ENCODE measurements at regions of chr7 and their contacts with region 1.

Region 1: DNA sequence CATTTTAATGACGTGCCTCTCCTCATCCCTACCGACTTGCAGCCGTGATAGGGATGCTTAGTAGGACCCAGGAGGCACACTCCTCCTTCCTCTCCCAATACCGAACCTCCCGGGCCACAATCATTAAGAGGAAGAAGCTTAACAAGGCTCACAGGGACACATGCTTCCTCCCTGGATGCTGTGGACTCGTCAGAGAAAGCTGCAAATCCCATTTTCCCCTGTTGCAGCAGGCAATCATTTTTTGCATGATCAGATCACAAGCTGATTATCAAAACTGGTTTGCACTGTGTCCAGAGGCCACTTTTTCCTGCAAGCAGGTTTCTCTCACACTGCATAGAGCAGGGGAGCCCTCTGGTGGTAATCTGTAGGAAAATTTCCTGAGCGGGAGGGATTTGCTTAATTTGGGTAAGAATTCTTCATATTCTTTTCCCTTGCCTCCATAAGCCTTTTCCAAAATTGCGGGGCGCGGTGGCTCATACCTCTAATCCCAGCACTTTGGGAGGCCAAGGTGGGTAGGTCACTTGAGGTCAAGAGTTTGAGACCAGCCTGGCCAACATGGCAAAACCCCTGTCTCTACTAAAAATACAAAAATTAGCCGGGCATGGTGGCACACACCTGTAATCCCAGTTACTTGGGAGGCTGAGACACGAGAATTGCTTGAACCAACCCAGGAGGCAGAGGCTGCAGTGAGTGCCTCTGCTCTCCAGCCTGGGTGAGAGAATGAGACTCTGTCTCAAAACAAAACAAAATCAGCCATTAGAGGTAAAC is 16.1 kb upstream of the LAMB4 start:
- DNase-seq: peak in 1 of 2 donors; percentile 75
- ATAC-seq: peak; percentile 85 to 92 (median 87)
- H3K4me3 ChIP-seq: peak overlapping the region in 5 of 10 donors; percentile 16 to 44 (median 31)
- H3K27ac ChIP-seq: peak overlapping the region in 1 of 10 donors; percentile 49
- H3K4me1 ChIP-seq: peaks cover 0 to 12% (median 0%) of the 10 kb centered on the region in 9 donors
- H3K27me3 ChIP-seq: peaks cover 0 to 10% (median 0%) of the 10 kb centered on the region in 7 donors
- CTCF ChIP-seq: peak; percentile 88 to 97 (median 92)

Region 2: DNA sequence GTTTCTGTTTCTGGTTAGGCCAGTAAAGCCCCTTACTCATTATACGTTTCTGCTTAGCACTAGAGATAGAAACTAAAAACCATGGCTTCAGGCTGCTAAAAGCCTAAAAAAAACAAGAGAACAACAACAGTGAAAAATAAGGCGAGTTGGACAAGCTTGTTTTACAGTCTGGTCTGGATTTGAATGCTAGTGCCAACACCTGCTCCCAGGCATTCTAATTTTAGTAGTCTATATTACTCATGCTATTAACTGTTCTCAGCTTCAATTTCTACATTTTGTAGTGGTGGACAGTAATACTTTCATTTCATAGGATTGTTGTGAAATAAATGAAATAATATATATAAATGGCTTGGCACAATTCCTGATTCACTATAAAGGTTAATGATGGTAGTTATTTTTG is 868.9 kb before region 1 on chr7:
- intact Hi-C with region 1: no loop called
- DNase-seq: no peak
- ATAC-seq: peak in 6 of 8 donors; percentile 49 to 87 (median 74)
- H3K4me3 ChIP-seq: no peak overlapping the region
- H3K27ac ChIP-seq: peak overlapping the region in 8 of 10 donors; percentile 11 to 77 (median 57)
- H3K4me1 ChIP-seq: peaks cover 0 to 10% (median 0%) of the 10 kb centered on the region in 9 donors
- H3K27me3 ChIP-seq: no peaks in the 10 kb centered on the region
- CTCF ChIP-seq: no peak

Region 3: GRCh38 chr7:107743567-107744344 is 402.5 kb before region 1 on chr7 and contains the start of gene CBLL1:
- intact Hi-C with region 1: loop called in 7 of 10 experiments (anchors 5 to 10 kb)
- DNase-seq: peak; percentile 97
- ATAC-seq: peak; percentile 98 to 99 (median 99)
- H3K4me3 ChIP-seq: peak within 1 kb of the TSS; percentile 52 to 97 (median 88)
- H3K27ac ChIP-seq: peak within 1 kb of the TSS; percentile 92 to 98 (median 96)
- H3K4me1 ChIP-seq: peaks cover 11 to 49% (median 46%) of the 10 kb centered on the region in 9 donors
- H3K27me3 ChIP-seq: no peaks in the 10 kb centered on the region
- CTCF ChIP-seq: peak; percentile 42 to 93 (median 73)
- total RNA-seq, gene CBLL1: 18.3 to 31.3 (median 23.1) TPM

Region 4: GRCh38 chr7:107879400-107880035 is 266.7 kb before region 1 on chr7:
- intact Hi-C with region 1: loop called in 8 of 10 experiments (anchors 5 to 10 kb)
- DNase-seq: no peak
- ATAC-seq: peak; percentile 62 to 79 (median 69)
- H3K4me3 ChIP-seq: no peak overlapping the region
- H3K27ac ChIP-seq: no peak overlapping the region
- H3K4me1 ChIP-seq: peaks cover 0 to 17% (median 0%) of the 10 kb centered on the region in 9 donors
- H3K27me3 ChIP-seq: peaks cover 0 to 4% (median 0%) of the 10 kb centered on the region in 7 donors
- CTCF ChIP-seq: peak; percentile 33 to 83 (median 72)

Region 5: DNA sequence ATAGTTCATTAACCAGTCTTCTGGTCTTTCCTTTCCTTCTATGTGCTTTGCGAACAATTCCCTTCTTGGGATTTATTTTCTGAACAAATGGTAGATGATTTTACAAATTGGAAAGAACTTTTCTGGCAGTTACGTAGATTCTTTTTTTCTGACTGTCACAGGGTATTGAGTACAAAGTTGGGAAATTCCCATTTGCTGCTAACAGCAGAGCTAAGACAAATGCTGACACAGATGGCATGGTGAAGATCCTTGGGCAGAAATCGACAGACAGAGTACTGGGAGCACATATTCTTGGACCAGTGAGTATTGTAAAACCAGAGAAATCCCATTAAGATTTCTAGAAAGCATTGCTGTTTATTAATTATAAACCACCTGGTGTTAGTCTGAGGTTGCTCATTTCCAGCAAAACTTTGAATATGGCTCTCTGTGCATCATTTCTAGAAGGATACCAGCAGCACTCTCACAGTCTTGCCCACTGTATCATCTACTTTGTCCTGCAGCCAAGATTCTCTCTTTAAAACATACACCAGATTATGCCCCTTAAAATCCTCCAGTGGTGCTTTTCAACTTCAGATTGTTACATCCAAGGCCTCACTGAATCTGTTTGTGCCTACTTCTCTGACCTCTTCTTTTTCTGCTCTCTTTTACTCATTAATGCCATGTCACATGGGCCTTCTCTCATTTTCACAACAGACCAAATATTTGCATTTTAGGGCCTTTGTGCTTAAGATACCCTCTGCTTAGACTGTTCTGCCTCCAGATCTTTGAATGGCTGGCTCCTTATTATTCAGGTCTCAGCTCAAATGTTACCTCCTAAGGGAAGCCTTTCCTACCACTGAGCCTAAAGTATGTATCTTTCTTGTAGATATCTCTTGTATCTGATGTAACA is 228.2 kb before region 1 on chr7:
- intact Hi-C with region 1: loop called in 2 of 10 experiments (anchors 10 kb)
- DNase-seq: no peak
- ATAC-seq: peak in 3 of 8 donors; percentile 42 to 80 (median 47)
- H3K4me3 ChIP-seq: no peak overlapping the region
- H3K27ac ChIP-seq: peak overlapping the region in 1 of 10 donors; percentile 1
- H3K4me1 ChIP-seq: peaks cover 0 to 35% (median 9%) of the 10 kb centered on the region in 9 donors
- H3K27me3 ChIP-seq: no peaks in the 10 kb centered on the region
- CTCF ChIP-seq: no peak

Region 6: DNA sequence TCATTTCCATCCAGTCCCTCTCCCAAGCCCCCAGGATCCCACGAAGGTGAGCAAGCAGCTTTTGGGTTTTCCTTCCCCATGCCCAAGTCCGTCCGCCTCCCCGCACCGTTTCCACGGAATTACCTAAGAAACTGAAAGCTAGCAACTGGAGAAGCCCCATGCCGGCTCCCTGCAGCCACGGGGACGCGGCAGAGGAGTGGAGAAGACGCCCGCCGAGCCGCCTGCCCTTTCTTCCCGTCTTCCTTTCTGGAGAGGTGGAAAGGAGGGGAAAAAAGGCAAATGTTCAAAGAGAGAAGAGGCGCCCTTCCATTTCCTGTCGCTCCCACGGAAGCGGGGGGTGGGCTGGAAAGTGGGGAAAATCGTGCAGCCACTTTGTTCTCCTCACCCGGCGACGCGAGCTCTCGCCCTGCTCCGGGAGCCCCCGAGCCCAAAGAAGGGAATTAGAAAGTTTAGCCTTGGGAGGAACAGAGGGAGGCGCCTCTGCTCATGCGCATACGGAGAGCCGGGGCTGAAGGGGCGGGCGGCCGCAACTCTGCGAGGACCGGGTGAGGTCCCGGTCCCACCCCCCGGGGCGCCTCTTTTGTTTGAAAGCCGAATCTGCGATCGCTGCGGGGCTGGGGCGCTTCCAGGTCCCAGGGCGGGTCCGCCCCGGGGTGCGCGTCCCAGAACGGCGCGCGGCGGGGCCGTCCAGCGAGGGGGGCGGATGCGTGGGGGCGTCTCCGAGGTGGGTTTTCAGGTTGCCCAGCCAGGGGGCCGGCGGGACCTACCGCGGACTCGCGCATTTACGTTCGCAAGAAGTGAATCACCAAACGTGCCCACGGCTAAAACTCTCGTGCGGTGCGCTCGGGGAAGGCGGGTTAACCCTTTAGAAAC is 143.3 kb before region 1 on chr7 and contains the start of gene LAMB1:
- intact Hi-C with region 1: loop called in 3 of 10 experiments (anchors 5 to 10 kb)
- DNase-seq: peak; percentile 77 to 78
- ATAC-seq: peak; percentile 71 to 84 (median 77)
- H3K4me3 ChIP-seq: peak within 1 kb of the TSS; percentile 52 to 88 (median 74)
- H3K27ac ChIP-seq: peak within 1 kb of the TSS; percentile 70 to 93 (median 86)
- H3K4me1 ChIP-seq: peaks cover 4 to 68% (median 44%) of the 10 kb centered on the region in 9 donors
- H3K27me3 ChIP-seq: peaks cover 0 to 58% (median 0%) of the 10 kb centered on the region in 7 donors
- CTCF ChIP-seq: no peak
- total RNA-seq, gene LAMB1: 33.3 to 84.8 (median 52.7) TPM

Region 7: GRCh38 chr7:108114117-108114841 is 32.0 kb before region 1 on chr7:
- intact Hi-C with region 1: loop called in 5 of 10 experiments (anchors 2 to 5 kb)
- DNase-seq: peak in 1 of 2 donors; percentile 21
- ATAC-seq: peak; percentile 58 to 92 (median 82)
- H3K4me3 ChIP-seq: no peak overlapping the region
- H3K27ac ChIP-seq: peak overlapping the region; percentile 42 to 87 (median 62)
- H3K4me1 ChIP-seq: peaks cover 0 to 27% (median 3%) of the 10 kb centered on the region in 9 donors
- H3K27me3 ChIP-seq: no peaks in the 10 kb centered on the region
- CTCF ChIP-seq: peak in 6 of 9 donors; percentile 7 to 36 (median 28)

Region 8: GRCh38 chr7:108203537-108203936 is 57.3 kb after region 1 on chr7:
- intact Hi-C with region 1: no loop called
- DNase-seq: no peak
- ATAC-seq: no peak
- H3K4me3 ChIP-seq: no peak overlapping the region
- H3K27ac ChIP-seq: no peak overlapping the region
- H3K4me1 ChIP-seq: no peaks in the 10 kb centered on the region
- H3K27me3 ChIP-seq: peaks cover 0 to 13% (median 0%) of the 10 kb centered on the region in 7 donors
- CTCF ChIP-seq: no peak

Measured in heart right ventricle (tissue), 16 donors.